Activated naive CD4-positive, alpha-beta T cell treated with anti-CD3 and anti-CD28 coated beads, Interleukin-2, amount 10 ng/mL, durations not matched to agents 7 days and 5 days (primary cell): ENCODE measurements at regions of chr5 and their contacts with region 1.

Region 1: GRCh38 chr5:7927466-7928375 is 58.8 kb downstream of the MTRR start:
- DNase-seq: peak; percentile 57
- H3K4me3 Mint-ChIP-seq: no peak overlapping the region
- H3K27ac Mint-ChIP-seq: no peak overlapping the region
- H3K4me1 Mint-ChIP-seq: no peaks in the 10 kb centered on the region
- H3K27me3 Mint-ChIP-seq: peaks cover 7% of the 10 kb centered on the region

Region 2: GRCh38 chr5:7886849-7887475 is 40.8 kb before region 1 on chr5:
- CTCF ChIA-PET with region 1: interaction called, 19 read pairs
- DNase-seq: no peak
- H3K4me3 Mint-ChIP-seq: no peak overlapping the region
- H3K27ac Mint-ChIP-seq: no peak overlapping the region
- H3K4me1 Mint-ChIP-seq: peaks cover 2% of the 10 kb centered on the region
- H3K27me3 Mint-ChIP-seq: no peaks in the 10 kb centered on the region

Region 3: GRCh38 chr5:9207817-9208418 is 1280.2 kb after region 1 on chr5:
- CTCF ChIA-PET with region 1: interaction called, 12 read pairs
- DNase-seq: no peak
- H3K4me3 Mint-ChIP-seq: no peak overlapping the region
- H3K27ac Mint-ChIP-seq: no peak overlapping the region
- H3K4me1 Mint-ChIP-seq: no peaks in the 10 kb centered on the region
- H3K27me3 Mint-ChIP-seq: no peaks in the 10 kb centered on the region